ENCODE measurements at regions of chr17 and their contacts with region 1.

Region 1: GRCh38 chr17:15999439-16000350 is at the starts of genes TTC19 and ZSWIM7:
- DNase-seq: peak; percentile 94 to 97 (median 96)
- H3K4me3 ChIP-seq: peak within 1 kb of the TSS; percentile 50 to 78 (median 65)
- H3K4me3 Mint-ChIP-seq: peak within 1 kb of the TSS; percentile 89 to 97
- H3K27ac ChIP-seq: peak within 1 kb of the TSS; percentile 95 to 98
- H3K27ac Mint-ChIP-seq: peak within 1 kb of the TSS; percentile 98 to 99 (median 99)
- H3K4me1 ChIP-seq: peaks cover 56 to 63% of the 10 kb centered on the region in 2 donors
- H3K4me1 Mint-ChIP-seq: peaks cover 57% of the 10 kb centered on the region
- H3K27me3 ChIP-seq: no peaks in the 10 kb centered on the region
- H3K27me3 Mint-ChIP-seq: peaks cover 0 to 3% (median 2%) of the 10 kb centered on the region in 3 donors
- CTCF ChIP-seq: no peak
- polyA plus RNA-seq, gene TTC19: 7.6 to 22.2 (median 20.6) TPM
- polyA plus RNA-seq, gene ZSWIM7: 43.1 to 70.1 (median 67.1) TPM

Region 2: GRCh38 chr17:15260376-15261257 is 739.1 kb before region 1 on chr17:
- intact Hi-C with region 1: loop called in 1 of 2 experiments (anchors 5 kb)
- DNase-seq: peak; percentile 50 to 71 (median 65)
- H3K4me3 ChIP-seq: peak overlapping the region; percentile 43 to 78 (median 50)
- H3K4me3 Mint-ChIP-seq: peak overlapping the region; percentile 93 to 98
- H3K27ac ChIP-seq: no peak overlapping the region
- H3K27ac Mint-ChIP-seq: peak overlapping the region; percentile 47 to 84 (median 79)
- H3K4me1 ChIP-seq: peaks cover 43% of the 10 kb centered on the region in 2 donors
- H3K4me1 Mint-ChIP-seq: peaks cover 48% of the 10 kb centered on the region
- H3K27me3 ChIP-seq: peaks cover 37 to 58% of the 10 kb centered on the region in 2 donors
- H3K27me3 Mint-ChIP-seq: peaks cover 64 to 79% (median 71%) of the 10 kb centered on the region in 3 donors
- CTCF ChIP-seq: peak; percentile 83

Region 3: DNA sequence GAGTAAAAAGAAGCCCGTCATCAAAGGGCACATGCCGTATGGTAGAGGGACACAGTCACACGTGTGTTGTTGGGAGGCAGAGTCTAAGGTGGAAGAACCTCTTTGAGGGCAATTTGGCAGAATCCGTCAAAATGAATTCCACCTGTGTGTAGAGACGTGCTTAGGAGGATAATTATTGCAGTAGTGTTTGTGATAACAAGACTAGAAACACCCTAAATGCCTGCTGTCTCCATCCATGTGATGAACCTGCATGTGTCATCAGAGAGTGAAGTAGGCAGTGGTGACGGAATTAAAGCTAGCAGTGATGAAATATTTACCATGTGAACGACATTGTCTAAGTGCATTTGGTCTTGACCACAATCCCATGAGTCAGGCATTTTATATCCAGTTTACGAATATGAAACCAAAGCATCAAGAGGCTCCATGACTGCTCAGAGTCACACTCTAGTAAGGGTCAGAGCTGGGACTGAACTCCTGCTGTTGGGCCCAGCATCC is 116.0 kb before region 1 on chr17:
- intact Hi-C with region 1: loop called in 1 of 2 experiments (anchors 2 kb)
- DNase-seq: peak; percentile 92 to 96 (median 95)
- H3K4me3 ChIP-seq: no peak overlapping the region
- H3K4me3 Mint-ChIP-seq: peak overlapping the region in 1 of 2 donors; percentile 55
- H3K27ac ChIP-seq: peak overlapping the region; percentile 46 to 79
- H3K27ac Mint-ChIP-seq: peak overlapping the region; percentile 70 to 95 (median 93)
- H3K4me1 ChIP-seq: peaks cover 23 to 37% of the 10 kb centered on the region in 2 donors
- H3K4me1 Mint-ChIP-seq: peaks cover 46% of the 10 kb centered on the region
- H3K27me3 ChIP-seq: no peaks in the 10 kb centered on the region
- H3K27me3 Mint-ChIP-seq: peaks cover 0 to 4% (median 3%) of the 10 kb centered on the region in 3 donors
- CTCF ChIP-seq: no peak

Region 4: GRCh38 chr17:15944759-15945529 is 54.8 kb before region 1 on chr17 and contains the start of gene ADORA2B:
- intact Hi-C with region 1: loop called (anchors 5 kb)
- DNase-seq: peak; percentile 66 to 78 (median 69)
- H3K4me3 ChIP-seq: peak within 1 kb of the TSS; percentile 68 to 79 (median 72)
- H3K4me3 Mint-ChIP-seq: peak within 1 kb of the TSS; percentile 80 to 89
- H3K27ac ChIP-seq: peak within 1 kb of the TSS in 1 of 2 donors; percentile 83
- H3K27ac Mint-ChIP-seq: peak within 1 kb of the TSS; percentile 83 to 98 (median 94)
- H3K4me1 ChIP-seq: peaks cover 58 to 65% of the 10 kb centered on the region in 2 donors
- H3K4me1 Mint-ChIP-seq: peaks cover 49% of the 10 kb centered on the region
- H3K27me3 ChIP-seq: peaks cover 0 to 5% of the 10 kb centered on the region in 2 donors
- H3K27me3 Mint-ChIP-seq: peaks cover 2 to 18% (median 6%) of the 10 kb centered on the region in 3 donors
- CTCF ChIP-seq: peak; percentile 79
- polyA plus RNA-seq, gene ADORA2B: 2.0 to 6.4 (median 4.4) TPM

Region 5: GRCh38 chr17:15954222-15954621 is 45.5 kb before region 1 on chr17:
- intact Hi-C with region 1: loop called (anchors 5 kb)
- DNase-seq: peak; percentile 46 to 86 (median 52)
- H3K4me3 ChIP-seq: no peak overlapping the region
- H3K4me3 Mint-ChIP-seq: no peak overlapping the region
- H3K27ac ChIP-seq: no peak overlapping the region
- H3K27ac Mint-ChIP-seq: peak overlapping the region in 4 of 7 donors; percentile 13 to 79 (median 40)
- H3K4me1 ChIP-seq: peaks cover 31 to 40% of the 10 kb centered on the region in 2 donors
- H3K4me1 Mint-ChIP-seq: peaks cover 46% of the 10 kb centered on the region
- H3K27me3 ChIP-seq: no peaks in the 10 kb centered on the region
- H3K27me3 Mint-ChIP-seq: peaks cover 0 to 5% (median 2%) of the 10 kb centered on the region in 3 donors
- CTCF ChIP-seq: no peak

Region 6: DNA sequence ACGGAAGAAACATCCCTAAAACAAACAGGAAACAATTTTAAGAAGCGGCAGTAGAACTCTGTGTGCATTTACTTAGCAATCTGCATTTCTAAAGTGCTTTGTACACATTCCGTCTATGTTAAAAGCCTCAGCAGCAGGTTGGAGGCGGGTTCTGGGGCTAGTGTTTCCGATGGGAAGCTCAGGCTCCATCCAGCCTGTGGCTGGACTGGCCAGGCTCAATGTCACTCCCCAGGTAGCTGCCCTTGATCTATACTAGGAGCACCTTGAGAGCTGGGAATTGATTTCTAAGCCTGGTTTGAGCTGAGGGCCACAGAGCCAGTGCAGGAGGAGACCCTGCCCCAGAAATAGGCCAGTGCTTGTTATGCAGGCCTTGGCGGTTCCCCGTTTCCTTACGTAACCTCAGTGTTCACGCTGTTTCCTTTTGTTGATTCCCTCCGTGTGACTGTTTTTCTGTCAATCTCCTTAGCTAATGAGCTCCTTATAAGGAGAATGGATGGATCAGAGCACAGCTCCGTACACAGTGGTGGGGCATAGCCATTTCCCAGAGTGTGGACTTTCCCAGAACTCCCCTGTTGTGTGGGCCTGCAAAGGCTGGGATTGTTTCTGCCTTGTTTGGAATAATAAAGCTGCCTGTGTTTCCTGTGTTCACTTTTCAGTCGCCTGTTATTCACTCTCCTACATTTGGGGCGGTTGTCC is 33.4 kb before region 1 on chr17:
- intact Hi-C with region 1: no loop called
- DNase-seq: peak; percentile 41 to 67 (median 48)
- H3K4me3 ChIP-seq: peak overlapping the region; percentile 1 to 64 (median 8)
- H3K4me3 Mint-ChIP-seq: peak overlapping the region; percentile 64 to 91
- H3K27ac ChIP-seq: peak overlapping the region; percentile 86 to 88
- H3K27ac Mint-ChIP-seq: peak overlapping the region; percentile 87 to 97 (median 93)
- H3K4me1 ChIP-seq: peaks cover 32 to 45% of the 10 kb centered on the region in 2 donors
- H3K4me1 Mint-ChIP-seq: peaks cover 44% of the 10 kb centered on the region
- H3K27me3 ChIP-seq: no peaks in the 10 kb centered on the region
- H3K27me3 Mint-ChIP-seq: peaks cover 0 to 2% (median 0%) of the 10 kb centered on the region in 3 donors
- CTCF ChIP-seq: no peak

Measured in CD14-positive monocyte (primary cell).